PC-3 (cell line): ENCODE measurements at regions of chr17 and their contacts with region 1.

Region 1: DNA sequence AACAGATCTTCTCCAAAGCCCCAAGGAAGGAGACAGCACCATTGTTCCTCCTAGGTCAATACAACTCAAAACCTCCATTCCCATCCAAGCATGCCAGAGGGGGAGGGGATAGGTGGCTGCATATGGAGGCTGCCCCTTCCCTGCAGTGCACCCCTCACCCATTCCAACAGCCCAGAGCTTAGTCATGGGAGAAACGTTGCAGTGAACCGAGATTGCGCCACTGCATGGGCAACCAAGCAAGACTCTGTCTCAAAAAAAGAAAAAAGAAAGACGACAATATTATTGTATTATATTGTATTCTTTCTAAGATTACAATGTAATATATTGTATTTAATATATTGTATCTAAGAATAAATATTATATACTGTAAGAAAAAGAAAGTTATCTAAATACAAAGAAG is 36.4 kb upstream of the CD300E start:
- DNase-seq: no peak
- ATAC-seq: no peak
- H3K4me3 ChIP-seq: no peak overlapping the region
- H3K27ac ChIP-seq: no peak overlapping the region
- H3K4me1 ChIP-seq: no peaks in the 10 kb centered on the region
- H3K27me3 ChIP-seq: peaks cover 76% of the 10 kb centered on the region
- CTCF ChIP-seq: no peak

Region 2: DNA sequence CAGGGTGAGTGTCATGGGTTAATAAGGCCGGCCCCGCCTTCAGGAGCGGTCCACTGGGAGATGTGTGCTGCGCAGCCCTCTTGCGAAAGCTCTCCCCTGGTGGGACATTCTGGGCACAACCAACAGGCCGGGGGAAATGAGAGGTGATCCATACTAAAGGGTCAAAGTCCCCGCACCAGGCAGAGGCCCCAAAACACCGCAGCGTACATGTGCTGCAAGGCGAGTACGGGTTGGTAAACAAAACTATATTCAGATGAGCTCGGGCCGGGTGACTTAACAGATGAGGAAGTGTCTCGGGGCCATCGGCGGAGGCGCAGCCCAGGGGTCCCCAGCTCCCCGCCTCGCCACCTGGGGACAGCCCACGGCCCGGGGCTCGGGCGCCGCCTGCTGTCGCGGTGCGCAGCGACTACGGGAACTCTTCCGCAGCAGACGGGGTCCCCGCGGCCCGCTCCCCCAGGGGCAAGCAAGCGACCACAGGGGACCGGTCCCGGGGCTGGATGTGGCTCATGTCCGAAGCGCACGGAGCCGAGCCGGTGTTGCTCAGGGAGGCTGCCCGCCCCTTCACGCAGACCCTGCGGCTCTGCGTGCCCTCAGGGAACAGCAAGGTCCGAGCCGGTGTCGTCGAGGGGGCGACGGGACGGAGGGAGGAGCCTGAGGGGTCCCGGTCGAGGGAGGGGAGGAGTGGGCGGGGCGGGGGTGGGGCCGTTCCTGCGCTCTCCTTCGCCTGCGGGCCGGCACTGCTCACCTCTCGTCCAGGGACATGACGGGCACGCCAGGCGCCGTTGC is 76.8 kb after region 1 on chr17 and contains the start of gene RAB37:
- CTCF ChIA-PET with region 1: interaction called, 53 read pairs
- POLR2A ChIA-PET with region 1: no interaction called
- intact Hi-C with region 1: loop called (anchors 1 kb)
- DNase-seq: no peak
- ATAC-seq: peak; percentile 12
- H3K4me3 ChIP-seq: no peak within 1 kb of the TSS; the same call in 1 of the 2 replicates
- H3K27ac ChIP-seq: no peak within 1 kb of the TSS
- H3K4me1 ChIP-seq: peaks cover 15% of the 10 kb centered on the region
- H3K27me3 ChIP-seq: peaks cover 60% of the 10 kb centered on the region
- CTCF ChIP-seq: peak; percentile 58
- total RNA-seq, gene RAB37: 0.17 and 0.66 TPM in 2 replicates

Region 3: GRCh38 chr17:74770498-74771318 is 110.8 kb after region 1 on chr17:
- CTCF ChIA-PET with region 1: interaction called, 7 read pairs
- POLR2A ChIA-PET with region 1: no interaction called
- intact Hi-C with region 1: loop called (anchors 1 kb)
- DNase-seq: peak; percentile 75
- ATAC-seq: peak; percentile 82
- H3K4me3 ChIP-seq: no peak overlapping the region
- H3K27ac ChIP-seq: no peak overlapping the region
- H3K4me1 ChIP-seq: peaks cover 6% of the 10 kb centered on the region
- H3K27me3 ChIP-seq: no peaks in the 10 kb centered on the region
- CTCF ChIP-seq: peak; percentile 93